Endothelial cell of umbilical vein (primary cell): ENCODE measurements at regions of chr7 and their contacts with region 1.

Region 1: DNA sequence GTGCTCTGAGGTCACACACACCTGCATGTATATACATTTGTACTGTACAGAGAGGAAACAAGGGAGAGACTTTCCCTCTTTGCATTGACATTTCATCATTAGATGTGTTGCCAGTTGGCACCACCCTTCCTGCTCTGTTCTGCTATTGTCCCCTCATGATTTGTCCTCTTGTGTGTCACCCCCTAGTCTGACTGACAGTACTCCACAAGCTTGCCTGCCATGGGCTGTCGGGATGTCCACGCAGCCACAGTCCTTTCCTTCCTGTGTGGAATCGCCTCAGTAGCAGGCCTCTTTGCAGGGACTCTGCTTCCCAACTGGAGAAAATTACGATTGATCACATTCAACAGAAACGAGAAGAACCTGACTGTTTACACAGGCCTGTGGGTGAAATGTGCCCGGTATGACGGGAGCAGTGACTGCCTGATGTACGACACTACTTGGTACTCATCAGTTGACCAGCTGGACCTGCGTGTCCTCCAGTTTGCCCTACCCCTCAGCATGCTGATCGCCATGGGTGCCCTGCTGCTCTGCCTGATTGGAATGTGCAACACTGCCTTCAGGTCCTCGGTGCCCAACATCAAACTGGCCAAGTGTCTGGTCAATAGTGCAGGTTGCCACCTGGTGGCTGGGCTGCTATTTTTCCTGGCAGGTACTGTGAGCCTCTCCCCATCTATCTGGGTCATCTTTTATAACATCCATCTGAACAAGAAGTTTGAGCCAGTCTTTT is 9.4 kb downstream of the CLDN12 start:
- DNase-seq: no peak
- H3K4me3 ChIP-seq: no peak overlapping the region
- H3K27ac ChIP-seq: no peak overlapping the region
- H3K4me1 ChIP-seq: peaks cover 11% of the 10 kb centered on the region
- H3K27me3 ChIP-seq: peaks cover 4 to 13% of the 10 kb centered on the region in 2 experiments
- CTCF ChIP-seq: peak in 1 of 2 donors; percentile 31
- POLR2A ChIP-seq: no peak

Region 2: DNA sequence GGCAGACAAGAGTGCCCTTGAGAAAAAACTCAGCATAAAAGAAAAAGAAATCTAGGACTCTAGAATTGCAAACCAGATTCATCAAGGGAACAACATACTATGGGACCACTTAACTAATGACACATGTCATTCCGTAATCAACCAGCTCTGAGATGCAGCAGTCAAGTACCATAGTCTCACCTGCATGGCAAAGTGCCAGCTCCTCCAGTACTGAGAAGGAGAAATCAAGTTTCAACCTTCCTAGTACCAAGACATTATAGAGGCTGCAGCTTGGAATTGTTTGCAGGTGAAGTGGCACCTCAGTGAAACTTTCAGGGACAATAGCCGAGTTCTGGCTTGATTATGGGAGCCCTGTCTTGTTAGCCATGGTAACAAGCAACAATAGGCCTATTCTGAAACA is 246.9 kb before region 1 on chr7:
- CTCF ChIA-PET with region 1: no interaction called
- POLR2A ChIA-PET with region 1: no interaction called
- dilution Hi-C with region 1: no loop called
- intact Hi-C with region 1: loop called (anchors 5 kb)
- DNase-seq: no peak
- H3K4me3 ChIP-seq: no peak overlapping the region
- H3K27ac ChIP-seq: no peak overlapping the region
- H3K4me1 ChIP-seq: peaks cover 8% of the 10 kb centered on the region
- H3K27me3 ChIP-seq: no peaks in the 10 kb centered on the region
- CTCF ChIP-seq: no peak
- POLR2A ChIP-seq: no peak

Region 3: GRCh38 chr7:90262438-90262837 is 150.2 kb before region 1 on chr7:
- CTCF ChIA-PET with region 1: no interaction called
- POLR2A ChIA-PET with region 1: no interaction called
- dilution Hi-C with region 1: no loop called
- intact Hi-C with region 1: loop called (anchors 1 kb)
- DNase-seq: peak; percentile 54
- H3K4me3 ChIP-seq: no peak overlapping the region
- H3K27ac ChIP-seq: no peak overlapping the region
- H3K4me1 ChIP-seq: peaks cover 8% of the 10 kb centered on the region
- H3K27me3 ChIP-seq: no peaks in the 10 kb centered on the region
- CTCF ChIP-seq: peak in 1 of 2 donors; percentile 15
- POLR2A ChIP-seq: no peak

Region 4: GRCh38 chr7:90312745-90313144 is 99.9 kb before region 1 on chr7:
- CTCF ChIA-PET with region 1: interaction called, 29 read pairs
- POLR2A ChIA-PET with region 1: no interaction called
- dilution Hi-C with region 1: no loop called
- intact Hi-C with region 1: loop called (anchors 1 kb)
- DNase-seq: peak; percentile 25
- H3K4me3 ChIP-seq: no peak overlapping the region
- H3K27ac ChIP-seq: no peak overlapping the region
- H3K4me1 ChIP-seq: no peaks in the 10 kb centered on the region
- H3K27me3 ChIP-seq: peaks cover 11 to 17% of the 10 kb centered on the region in 2 experiments
- CTCF ChIP-seq: peak; percentile 4 to 23
- POLR2A ChIP-seq: no peak

Region 5: DNA sequence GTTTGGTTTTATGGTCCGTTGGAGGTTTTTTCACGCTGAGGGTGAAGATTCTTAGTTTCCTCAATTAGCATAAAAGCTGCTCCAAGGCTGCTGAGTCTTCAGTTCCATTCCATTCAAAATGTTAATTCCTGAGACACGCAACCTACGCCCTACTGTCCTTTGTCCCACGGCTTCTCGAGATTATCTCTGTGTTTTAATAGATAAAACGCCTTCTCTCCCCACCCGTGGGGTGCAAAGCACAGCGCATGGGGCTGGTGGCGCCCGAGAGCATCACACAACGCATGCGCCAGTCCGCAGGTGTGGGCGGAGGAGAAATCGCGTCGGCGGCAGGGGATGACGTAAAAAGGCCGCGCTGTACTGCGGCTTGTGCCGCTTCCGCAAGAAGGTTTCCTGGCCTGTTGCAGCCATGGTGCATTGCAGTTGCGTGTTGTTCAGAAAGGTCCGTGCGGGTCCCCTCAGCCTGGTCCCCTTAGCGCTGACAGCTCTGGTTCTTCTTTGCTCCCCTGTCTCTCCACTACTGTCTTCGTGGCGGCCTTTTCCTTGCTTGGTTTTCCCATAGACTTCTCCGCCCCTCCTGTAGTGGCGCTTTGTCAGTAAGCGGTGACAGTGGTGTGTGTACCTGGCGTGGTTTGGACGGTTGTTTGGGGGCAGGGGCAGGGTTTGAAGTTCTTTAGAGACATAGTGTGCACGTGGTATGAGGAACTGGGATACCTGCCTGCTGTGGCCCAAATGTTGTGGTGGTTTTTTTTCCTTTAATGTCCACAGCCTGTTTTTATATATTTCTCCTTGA is 66.1 kb before region 1 on chr7 and contains the start of gene GTPBP10:
- CTCF ChIA-PET with region 1: interaction called, 19 read pairs
- POLR2A ChIA-PET with region 1: no interaction called
- dilution Hi-C with region 1: no loop called
- intact Hi-C with region 1: loop called (anchors 2 kb)
- DNase-seq: peak; percentile 97
- H3K4me3 ChIP-seq: peak within 1 kb of the TSS; percentile 88 to 95 (median 91)
- H3K27ac ChIP-seq: peak within 1 kb of the TSS; percentile 57
- H3K4me1 ChIP-seq: peaks cover 12% of the 10 kb centered on the region
- H3K27me3 ChIP-seq: no peaks in the 10 kb centered on the region
- CTCF ChIP-seq: peak; percentile 69 to 71
- POLR2A ChIP-seq: peak; percentile 95
- total RNA-seq, gene GTPBP10: 14.6 and 16.7 TPM in 2 replicates

Region 6: GRCh38 chr7:90383861-90384260 is 28.8 kb before region 1 on chr7:
- CTCF ChIA-PET with region 1: interaction called, 3 read pairs
- POLR2A ChIA-PET with region 1: no interaction called
- dilution Hi-C with region 1: no loop called
- intact Hi-C with region 1: loop called (anchors 1 kb)
- DNase-seq: peak; percentile 71
- H3K4me3 ChIP-seq: no peak overlapping the region
- H3K27ac ChIP-seq: peak overlapping the region; percentile 76
- H3K4me1 ChIP-seq: peaks cover 29% of the 10 kb centered on the region
- H3K27me3 ChIP-seq: no peaks in the 10 kb centered on the region
- CTCF ChIP-seq: no peak
- POLR2A ChIP-seq: peak; percentile 17

Region 7: GRCh38 chr7:90461219-90461618 is 48.6 kb after region 1 on chr7:
- CTCF ChIA-PET with region 1: no interaction called
- POLR2A ChIA-PET with region 1: no interaction called
- dilution Hi-C with region 1: no loop called
- intact Hi-C with region 1: no loop called
- DNase-seq: no peak
- H3K4me3 ChIP-seq: no peak overlapping the region
- H3K27ac ChIP-seq: no peak overlapping the region
- H3K4me1 ChIP-seq: no peaks in the 10 kb centered on the region
- H3K27me3 ChIP-seq: no peaks in the 10 kb centered on the region
- CTCF ChIP-seq: no peak
- POLR2A ChIP-seq: no peak